Activated CD8-positive, alpha-beta memory T cell treated with anti-CD3 and anti-CD28 coated beads, Interleukin-2, amount 10 ng/mL, durations not matched to agents 7 days and 5 days (primary cell): ENCODE measurements at regions of chr14 and their contacts with region 1.

Region 1: DNA sequence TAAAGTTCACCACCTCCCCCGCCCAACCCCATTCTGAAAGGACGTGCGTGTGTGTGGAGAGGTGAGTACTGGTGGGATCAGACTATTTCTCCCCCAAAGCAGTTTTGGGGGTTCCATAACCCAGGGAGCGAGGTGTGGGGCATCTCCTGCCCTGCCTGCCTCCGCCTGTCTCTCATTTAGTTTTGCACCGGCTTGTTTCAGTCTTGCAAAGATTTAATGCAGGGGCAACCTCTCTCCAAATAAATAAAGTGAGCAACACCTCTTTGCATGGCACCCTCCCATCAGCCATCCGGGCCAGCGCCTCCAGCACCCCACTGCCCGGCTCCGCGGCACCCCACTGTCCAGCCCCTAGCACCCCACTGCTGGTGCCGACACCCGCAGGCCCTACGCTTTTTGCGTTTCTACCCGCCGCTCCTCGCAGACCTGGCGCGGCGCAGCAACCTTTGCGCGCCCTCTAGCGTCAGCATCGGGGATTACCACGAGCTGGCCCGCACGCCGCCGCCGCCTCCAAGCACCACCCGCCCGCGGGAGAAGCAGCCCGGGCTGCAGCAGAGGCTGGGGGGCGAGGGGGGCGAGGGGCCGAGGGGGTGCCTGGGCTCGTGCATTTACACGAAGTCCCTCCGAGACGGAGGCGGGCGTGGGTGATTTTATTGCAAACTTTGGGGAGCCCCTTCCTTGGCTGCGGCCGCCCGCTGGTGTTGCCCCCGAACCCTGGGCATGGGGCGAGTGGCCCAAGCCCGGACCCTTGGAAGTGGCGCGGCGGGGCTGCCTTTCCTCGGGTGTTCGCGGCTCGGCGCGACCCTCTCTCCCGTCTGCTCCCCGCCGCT is 55.8 kb upstream of the VRK1 start:
- DNase-seq: peak; percentile 76
- ATAC-seq: peak; percentile 94
- H3K4me3 Mint-ChIP-seq: peak overlapping the region; percentile 41
- H3K27ac Mint-ChIP-seq: no peak overlapping the region
- H3K4me1 Mint-ChIP-seq: peaks cover 8% of the 10 kb centered on the region
- H3K27me3 Mint-ChIP-seq: peaks cover 69% of the 10 kb centered on the region

Region 2: GRCh38 chr14:96584199-96584906 is 157.0 kb before region 1 on chr14:
- CTCF ChIA-PET with region 1: interaction called, 11 read pairs
- DNase-seq: peak; percentile 59
- ATAC-seq: peak; percentile 79
- H3K4me3 Mint-ChIP-seq: no peak overlapping the region
- H3K27ac Mint-ChIP-seq: no peak overlapping the region
- H3K4me1 Mint-ChIP-seq: peaks cover 8% of the 10 kb centered on the region
- H3K27me3 Mint-ChIP-seq: peaks cover 20% of the 10 kb centered on the region

Region 3: DNA sequence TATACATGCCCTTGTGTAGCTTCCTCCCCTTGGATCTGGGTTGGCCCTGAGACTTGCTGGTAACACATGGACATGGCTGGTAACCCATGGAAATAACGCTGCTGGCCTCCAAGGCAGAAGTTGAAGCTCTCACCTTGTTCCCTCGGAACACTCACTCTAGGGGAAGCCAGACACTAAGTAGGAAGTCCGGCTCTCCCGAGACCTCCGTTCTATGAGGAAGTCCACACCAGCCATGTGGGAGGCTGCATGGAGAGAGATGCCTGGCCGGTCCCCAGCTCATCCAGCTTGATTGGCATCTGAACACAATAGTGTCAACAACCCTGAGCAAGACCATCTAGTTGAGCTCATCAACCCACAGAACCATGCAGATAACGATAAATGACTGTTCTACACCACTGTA is 16.1 kb after region 1 on chr14:
- CTCF ChIA-PET with region 1: interaction called, 15 read pairs
- DNase-seq: no peak
- ATAC-seq: no peak
- H3K4me3 Mint-ChIP-seq: no peak overlapping the region
- H3K27ac Mint-ChIP-seq: no peak overlapping the region
- H3K4me1 Mint-ChIP-seq: peaks cover 1% of the 10 kb centered on the region
- H3K27me3 Mint-ChIP-seq: peaks cover 19% of the 10 kb centered on the region